CD8-positive, alpha-beta T cell (primary cell): ENCODE measurements at regions of chr6 and their contacts with region 1.

Region 1: DNA sequence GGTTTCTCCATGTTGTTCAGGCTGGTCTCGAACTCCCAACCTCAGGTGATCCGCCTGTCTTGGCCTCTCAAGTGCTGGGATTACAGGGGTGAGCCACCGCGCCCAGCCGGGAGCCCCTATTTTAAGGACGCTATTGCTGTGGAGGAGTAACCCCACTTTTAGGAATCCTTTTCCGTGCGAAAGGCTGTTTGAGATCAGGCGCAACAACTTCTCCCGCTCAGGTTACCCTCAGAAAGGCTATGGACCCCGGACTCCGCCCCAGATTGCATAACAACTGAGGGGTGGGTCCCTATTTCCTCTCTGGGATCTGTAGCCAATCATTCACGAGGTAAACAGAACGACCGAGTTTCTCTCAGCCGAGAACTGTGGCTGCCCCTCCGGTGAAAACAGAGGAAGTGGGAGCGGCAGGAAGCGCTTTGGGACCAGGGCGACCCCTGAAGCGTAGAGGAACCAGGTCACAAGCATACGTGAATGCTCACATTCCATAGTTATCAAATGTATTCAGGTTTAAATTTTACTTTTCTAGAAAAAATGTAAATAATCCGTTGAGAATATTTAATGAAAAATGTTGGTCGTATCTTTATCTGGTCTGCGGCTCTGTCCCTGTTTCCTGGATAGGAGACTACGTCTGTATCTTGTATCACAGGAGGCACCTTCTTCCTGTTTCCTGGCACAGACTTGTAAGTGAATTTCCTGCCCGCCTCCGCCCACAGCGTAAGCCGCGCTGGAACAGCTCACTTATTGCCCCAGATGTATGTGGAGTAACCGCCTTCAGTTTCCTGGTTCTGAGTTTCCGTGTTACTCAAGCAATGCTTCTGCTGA is 26.8 kb downstream of the HLA-E start:
- DNase-seq: peak; percentile 77 to 98 (median 90)
- ATAC-seq: peak; percentile 83
- H3K4me3 ChIP-seq: peak overlapping the region; percentile 36 to 43
- H3K4me3 Mint-ChIP-seq: peak overlapping the region; percentile 83
- H3K27ac ChIP-seq: peak overlapping the region; percentile 82 to 99
- H3K27ac Mint-ChIP-seq: peak overlapping the region; percentile 99
- H3K4me1 ChIP-seq: peaks cover 61% of the 10 kb centered on the region
- H3K4me1 Mint-ChIP-seq: peaks cover 63% of the 10 kb centered on the region
- H3K27me3 ChIP-seq: no peaks in the 10 kb centered on the region
- H3K27me3 Mint-ChIP-seq: no peaks in the 10 kb centered on the region
- CTCF ChIP-seq: no peak

Region 2: DNA sequence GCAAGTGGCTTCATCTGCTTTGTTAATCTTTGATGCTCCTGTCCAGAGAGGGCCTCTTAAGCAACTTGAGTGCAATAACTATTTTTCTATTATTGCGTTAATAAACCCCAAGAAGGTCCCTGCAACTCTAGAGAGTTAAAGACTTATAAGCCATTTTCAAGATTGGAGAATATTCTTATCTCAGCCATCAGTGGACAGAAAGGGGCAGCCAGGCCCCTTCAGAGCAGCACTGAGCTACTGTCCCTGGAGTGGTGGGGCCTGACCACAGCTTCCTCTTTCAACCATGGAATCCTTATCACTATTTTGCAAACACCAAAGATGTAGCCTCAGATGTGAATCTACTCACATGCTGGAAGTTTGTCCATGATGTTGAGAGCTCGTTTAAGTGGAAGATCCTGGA is 1025.6 kb before region 1 on chr6:
- CTCF ChIA-PET with region 1: no interaction called
- POLR2A ChIA-PET with region 1: no interaction called
- intact Hi-C with region 1: no loop called
- DNase-seq: no peak
- ATAC-seq: no peak
- H3K4me3 ChIP-seq: no peak overlapping the region
- H3K4me3 Mint-ChIP-seq: no peak overlapping the region
- H3K27ac ChIP-seq: no peak overlapping the region
- H3K27ac Mint-ChIP-seq: no peak overlapping the region
- H3K4me1 ChIP-seq: no peaks in the 10 kb centered on the region
- H3K4me1 Mint-ChIP-seq: no peaks in the 10 kb centered on the region
- H3K27me3 ChIP-seq: peaks cover 0 to 3% of the 10 kb centered on the region in 2 experiments
- H3K27me3 Mint-ChIP-seq: peaks cover 34% of the 10 kb centered on the region
- CTCF ChIP-seq: no peak

Region 3: GRCh38 chr6:29864037-29864795 is 651.9 kb before region 1 on chr6:
- CTCF ChIA-PET with region 1: no interaction called
- POLR2A ChIA-PET with region 1: no interaction called
- intact Hi-C with region 1: no loop called
- DNase-seq: no peak
- ATAC-seq: no peak
- H3K4me3 ChIP-seq: no peak overlapping the region
- H3K4me3 Mint-ChIP-seq: no peak overlapping the region
- H3K27ac ChIP-seq: no peak overlapping the region
- H3K27ac Mint-ChIP-seq: no peak overlapping the region
- H3K4me1 ChIP-seq: no peaks in the 10 kb centered on the region
- H3K4me1 Mint-ChIP-seq: no peaks in the 10 kb centered on the region
- H3K27me3 ChIP-seq: peaks cover 0 to 5% of the 10 kb centered on the region in 2 experiments
- H3K27me3 Mint-ChIP-seq: peaks cover 52% of the 10 kb centered on the region
- CTCF ChIP-seq: no peak

Region 4: GRCh38 chr6:30500421-30501355 is 15.5 kb before region 1 on chr6:
- CTCF ChIA-PET with region 1: interaction called, 17 read pairs
- POLR2A ChIA-PET with region 1: interaction called, 359 read pairs
- intact Hi-C with region 1: no loop called
- DNase-seq: peak in 1 of 9 experiments; percentile 30
- ATAC-seq: peak; percentile 55
- H3K4me3 ChIP-seq: peak overlapping the region; percentile 14 to 38
- H3K4me3 Mint-ChIP-seq: peak overlapping the region; percentile 80
- H3K27ac ChIP-seq: no peak overlapping the region
- H3K27ac Mint-ChIP-seq: peak overlapping the region; percentile 83
- H3K4me1 ChIP-seq: peaks cover 38% of the 10 kb centered on the region
- H3K4me1 Mint-ChIP-seq: peaks cover 42% of the 10 kb centered on the region
- H3K27me3 ChIP-seq: no peaks in the 10 kb centered on the region
- H3K27me3 Mint-ChIP-seq: no peaks in the 10 kb centered on the region
- CTCF ChIP-seq: no peak